Motor neuron (in vitro differentiated cells): ENCODE measurements at regions of chr2 and their contacts with region 1.

Region 1: DNA sequence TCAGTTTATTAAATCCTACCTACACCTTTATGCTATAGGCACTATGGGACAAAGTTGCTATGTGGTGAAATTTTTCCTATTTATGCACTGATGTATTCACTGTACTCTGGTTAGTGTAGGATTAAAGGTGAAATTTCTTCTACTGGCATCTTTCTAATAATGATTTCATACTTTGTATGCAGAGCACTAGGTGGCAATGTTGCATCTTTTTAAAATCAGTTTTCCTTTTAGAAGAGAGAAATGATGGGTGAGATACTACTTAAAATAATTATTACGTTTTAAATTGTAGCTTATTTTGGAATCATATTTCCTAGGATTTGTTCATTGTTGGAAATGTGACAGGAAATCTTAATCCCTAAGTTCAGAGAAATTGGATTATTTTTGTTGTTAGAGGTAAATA is 150.9 kb downstream of the CD8B2 start:
- ATAC-seq: peak in 3 of 8 experiments; percentile 34 to 52 (median 38)
- H3K4me3 ChIP-seq: no peak overlapping the region
- H3K27ac ChIP-seq: no peak overlapping the region
- H3K4me1 ChIP-seq: no peaks in the 10 kb centered on the region

Region 2: GRCh38 chr2:106562268-106563186 is 75.5 kb before region 1 on chr2:
- in situ Hi-C with region 1: no loop called
- ATAC-seq: no peak
- H3K4me3 ChIP-seq: no peak overlapping the region
- H3K27ac ChIP-seq: no peak overlapping the region
- H3K4me1 ChIP-seq: peaks cover 3 to 10% of the 10 kb centered on the region in 2 donors

Region 3: GRCh38 chr2:106572541-106573450 is 65.2 kb before region 1 on chr2:
- in situ Hi-C with region 1: no loop called
- ATAC-seq: no peak
- H3K4me3 ChIP-seq: no peak overlapping the region
- H3K27ac ChIP-seq: no peak overlapping the region
- H3K4me1 ChIP-seq: peaks cover 6 to 11% of the 10 kb centered on the region in 2 donors

Region 4: DNA sequence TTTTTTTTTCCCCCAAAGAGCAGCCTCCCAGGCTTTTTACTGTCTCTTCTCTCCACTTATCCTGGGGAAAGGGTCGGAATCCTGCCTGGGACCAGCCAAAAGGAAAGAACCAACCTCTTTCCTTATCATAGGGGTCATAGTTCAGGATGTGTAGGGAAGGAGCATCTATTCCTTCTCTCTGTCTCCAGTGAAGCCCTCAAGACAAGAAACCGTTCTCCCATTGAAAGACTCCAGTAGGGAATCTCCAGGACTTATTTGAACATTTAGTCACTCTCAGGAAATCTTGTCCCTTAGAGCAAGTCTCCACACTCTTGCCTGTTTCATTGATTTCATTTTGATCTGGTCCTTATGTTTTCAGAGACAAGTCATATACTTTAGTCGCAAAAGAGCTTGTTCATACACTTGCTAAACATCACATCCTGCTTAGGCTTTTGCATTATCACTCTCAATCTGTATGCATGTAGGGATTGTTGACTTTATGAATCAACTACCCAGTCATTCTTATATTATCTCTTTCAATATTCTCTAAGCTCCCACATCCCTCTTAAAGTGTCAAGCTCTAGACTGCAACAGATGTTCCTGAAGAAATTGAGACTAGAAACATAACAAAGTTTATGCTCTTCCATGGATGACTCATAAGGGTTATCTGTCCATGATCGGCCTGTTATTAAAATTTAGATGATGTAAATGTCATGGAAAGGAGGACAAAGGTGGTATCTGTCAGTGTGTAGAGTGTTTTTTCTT is 364.1 kb after region 1 on chr2:
- in situ Hi-C with region 1: loop called in 1 of 9 experiments (anchors 25 kb)
- ATAC-seq: peak in 3 of 8 experiments; percentile 43 to 71 (median 56)
- H3K4me3 ChIP-seq: no peak overlapping the region
- H3K27ac ChIP-seq: no peak overlapping the region
- H3K4me1 ChIP-seq: peaks cover 0 to 8% of the 10 kb centered on the region in 2 donors

Region 5: GRCh38 chr2:108184419-108184818 is 1546.4 kb after region 1 on chr2:
- in situ Hi-C with region 1: loop called in 1 of 9 experiments (anchors 25 kb)
- ATAC-seq: peak in 4 of 8 experiments; percentile 20 to 71 (median 68)
- H3K4me3 ChIP-seq: no peak overlapping the region
- H3K27ac ChIP-seq: no peak overlapping the region
- H3K4me1 ChIP-seq: no peaks in the 10 kb centered on the region